GM12878 (cell line): ENCODE measurements at regions of chr7 and their contacts with region 1.

Region 1: DNA sequence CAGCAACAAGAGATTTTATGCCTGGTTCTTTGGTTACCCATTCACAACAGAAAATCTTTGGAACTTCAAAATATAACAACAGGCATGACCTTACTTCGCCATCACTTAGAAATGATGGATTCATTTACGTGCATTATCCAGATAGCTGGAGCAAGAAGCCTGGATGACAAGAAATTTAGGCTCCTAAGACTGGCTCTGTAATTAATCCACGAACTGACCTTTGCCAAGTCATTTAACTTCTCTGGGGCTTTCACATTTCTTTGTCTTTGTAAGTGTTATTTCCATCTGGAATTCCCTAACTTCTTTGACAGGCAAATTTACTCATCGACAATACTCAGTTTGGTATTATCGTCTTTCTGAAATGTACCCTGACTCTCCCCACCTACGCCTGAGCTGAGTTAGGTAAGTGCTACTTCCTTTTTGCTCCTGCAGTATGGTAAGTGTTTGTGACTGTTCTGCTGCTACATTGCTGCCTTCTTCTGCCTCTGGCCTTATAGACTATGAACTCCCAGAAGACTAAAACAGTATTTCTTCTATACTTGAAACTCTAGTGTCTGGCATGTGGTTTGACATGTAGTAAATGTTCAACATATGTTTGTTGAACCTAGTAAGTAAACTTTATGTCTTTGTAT is 5.5 kb upstream of the MDFIC start:
- DNase-seq: peak; percentile 85
- ATAC-seq: peak; percentile 91
- H3K4me3 ChIP-seq: peak overlapping the region; percentile 54; the same call in 1 of the 2 replicates
- H3K27ac ChIP-seq: peak overlapping the region; percentile 95
- H3K4me1 ChIP-seq: peaks cover 19% of the 10 kb centered on the region
- H3K27me3 ChIP-seq: no peaks in the 10 kb centered on the region
- CTCF ChIP-seq: no peak
- EP300 ChIP-seq: peak in 1 of 2 experiments; percentile 93; a peak in 3 of 4 replicates
- POLR2A ChIP-seq: peak; percentile 78
- RAD21 ChIP-seq: no peak

Region 2: GRCh38 chr7:114930829-114931655 is 14.7 kb after region 1 on chr7:
- CTCF ChIA-PET with region 1: interaction called, 19 read pairs
- POLR2A ChIA-PET with region 1: interaction called, 30 read pairs
- RAD21 ChIA-PET with region 1: interaction called, 34 read pairs
- SMC1A ChIA-PET with region 1: interaction called, 122 read pairs
- in situ Hi-C with region 1: no loop called
- intact Hi-C with region 1: no loop called
- DNase-seq: no peak
- ATAC-seq: peak; percentile 49
- H3K4me3 ChIP-seq: peak overlapping the region; percentile 62
- H3K27ac ChIP-seq: peak overlapping the region; percentile 92
- H3K4me1 ChIP-seq: peaks cover 26% of the 10 kb centered on the region
- H3K27me3 ChIP-seq: no peaks in the 10 kb centered on the region
- CTCF ChIP-seq: no peak
- EP300 ChIP-seq: peak in 1 of 2 experiments; percentile 73; a peak in 2 of 4 replicates
- POLR2A ChIP-seq: no peak
- RAD21 ChIP-seq: no peak

Region 3: DNA sequence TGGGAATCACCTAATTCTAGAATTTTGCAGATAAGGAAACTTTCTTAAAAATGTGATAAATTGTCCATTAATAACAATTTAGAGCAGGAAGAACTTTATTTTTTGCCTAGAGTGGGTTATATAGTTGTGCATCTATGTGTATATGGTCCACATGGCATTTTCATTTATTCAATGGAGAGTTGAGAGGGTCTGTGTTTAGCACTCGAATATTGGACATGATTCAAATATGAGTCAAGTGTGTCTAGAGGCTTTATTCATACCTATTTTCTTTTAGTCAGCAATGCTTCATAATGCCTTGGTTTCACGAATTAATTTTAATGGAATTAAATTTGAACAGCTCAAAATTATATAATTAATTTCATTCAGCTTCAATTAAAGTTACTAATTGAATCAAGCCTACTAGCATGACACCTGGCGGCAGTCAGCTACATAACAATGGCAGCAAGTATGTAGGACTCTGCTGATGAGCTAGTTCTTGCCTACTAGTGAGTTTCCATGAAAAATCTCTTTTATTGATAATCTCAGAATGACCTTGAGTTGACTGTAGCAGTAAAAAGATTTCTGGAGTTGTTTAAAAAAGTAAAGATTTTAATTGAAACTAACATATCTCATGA is 23.2 kb after region 1 on chr7:
- CTCF ChIA-PET with region 1: interaction called, 10 read pairs
- POLR2A ChIA-PET with region 1: interaction called, 4 read pairs
- RAD21 ChIA-PET with region 1: interaction called, 11 read pairs
- SMC1A ChIA-PET with region 1: interaction called, 122 read pairs
- in situ Hi-C with region 1: no loop called
- intact Hi-C with region 1: no loop called
- DNase-seq: no peak
- ATAC-seq: peak; percentile 51
- H3K4me3 ChIP-seq: no peak overlapping the region
- H3K27ac ChIP-seq: no peak overlapping the region; the same call in 1 of the 2 replicates
- H3K4me1 ChIP-seq: peaks cover 47% of the 10 kb centered on the region
- H3K27me3 ChIP-seq: no peaks in the 10 kb centered on the region
- CTCF ChIP-seq: peak; percentile 44 to 57 (median 55); a peak in 5 of 6 replicates
- EP300 ChIP-seq: no peak
- POLR2A ChIP-seq: no peak
- RAD21 ChIP-seq: peak; percentile 63

Region 4: GRCh38 chr7:114959931-114960330 is 43.6 kb after region 1 on chr7:
- CTCF ChIA-PET with region 1: no interaction called
- POLR2A ChIA-PET with region 1: interaction called, 3 read pairs
- RAD21 ChIA-PET with region 1: interaction called, 3 read pairs
- SMC1A ChIA-PET with region 1: interaction called, 11 read pairs
- in situ Hi-C with region 1: no loop called
- intact Hi-C with region 1: no loop called
- DNase-seq: peak; percentile 38
- ATAC-seq: peak; percentile 83
- H3K4me3 ChIP-seq: peak overlapping the region; percentile 10; the same call in 1 of the 2 replicates
- H3K27ac ChIP-seq: no peak overlapping the region
- H3K4me1 ChIP-seq: peaks cover 12% of the 10 kb centered on the region; the same call in 1 of the 2 replicates
- H3K27me3 ChIP-seq: no peaks in the 10 kb centered on the region
- CTCF ChIP-seq: no peak
- EP300 ChIP-seq: no peak
- POLR2A ChIP-seq: no peak
- RAD21 ChIP-seq: no peak

Region 5: DNA sequence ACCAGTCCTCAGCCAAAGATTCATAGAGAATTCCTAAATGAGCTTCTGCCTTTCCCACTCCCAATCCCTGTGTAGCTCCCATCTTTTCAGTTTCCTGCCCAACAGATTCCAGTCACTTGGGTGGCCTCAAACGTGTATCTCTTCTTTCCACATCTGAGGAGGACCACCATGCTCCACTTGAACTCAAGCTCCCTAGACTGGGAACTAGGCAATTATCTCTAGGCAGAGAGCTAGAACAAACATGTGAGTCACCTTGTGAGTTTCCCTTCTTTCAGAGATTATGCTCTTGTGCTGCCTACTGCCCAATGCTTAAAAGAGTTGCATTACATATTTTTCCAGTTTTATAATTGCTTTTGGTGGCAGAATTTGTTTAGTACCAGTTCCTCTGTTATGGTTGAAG is 183.5 kb after region 1 on chr7:
- CTCF ChIA-PET with region 1: no interaction called
- POLR2A ChIA-PET with region 1: no interaction called
- RAD21 ChIA-PET with region 1: no interaction called
- SMC1A ChIA-PET with region 1: no interaction called
- in situ Hi-C with region 1: no loop called
- intact Hi-C with region 1: no loop called
- DNase-seq: no peak
- ATAC-seq: no peak
- H3K4me3 ChIP-seq: no peak overlapping the region
- H3K27ac ChIP-seq: no peak overlapping the region
- H3K4me1 ChIP-seq: no peaks in the 10 kb centered on the region
- H3K27me3 ChIP-seq: no peaks in the 10 kb centered on the region
- CTCF ChIP-seq: no peak
- EP300 ChIP-seq: no peak
- POLR2A ChIP-seq: no peak
- RAD21 ChIP-seq: no peak